Naive thymus-derived CD4-positive, alpha-beta T cell (primary cell): ENCODE measurements at regions of chr12 and their contacts with region 1.

Region 1: GRCh38 chr12:92118826-92119536 is 26.7 kb downstream of the BTG1 start:
- DNase-seq: no peak
- ATAC-seq: no peak
- H3K4me3 ChIP-seq: no peak overlapping the region
- H3K4me3 Mint-ChIP-seq: peak overlapping the region in 3 of 10 donors; percentile 27 to 50 (median 45)
- H3K27ac ChIP-seq: no peak overlapping the region
- H3K27ac Mint-ChIP-seq: peak overlapping the region in 7 of 9 donors; percentile 24 to 64 (median 48)
- H3K4me1 ChIP-seq: peaks cover 16 to 21% of the 10 kb centered on the region in 2 donors
- H3K4me1 Mint-ChIP-seq: peaks cover 34 to 69% (median 63%) of the 10 kb centered on the region in 7 donors
- H3K27me3 ChIP-seq: no peaks in the 10 kb centered on the region
- H3K27me3 Mint-ChIP-seq: no peaks in the 10 kb centered on the region

Region 2: DNA sequence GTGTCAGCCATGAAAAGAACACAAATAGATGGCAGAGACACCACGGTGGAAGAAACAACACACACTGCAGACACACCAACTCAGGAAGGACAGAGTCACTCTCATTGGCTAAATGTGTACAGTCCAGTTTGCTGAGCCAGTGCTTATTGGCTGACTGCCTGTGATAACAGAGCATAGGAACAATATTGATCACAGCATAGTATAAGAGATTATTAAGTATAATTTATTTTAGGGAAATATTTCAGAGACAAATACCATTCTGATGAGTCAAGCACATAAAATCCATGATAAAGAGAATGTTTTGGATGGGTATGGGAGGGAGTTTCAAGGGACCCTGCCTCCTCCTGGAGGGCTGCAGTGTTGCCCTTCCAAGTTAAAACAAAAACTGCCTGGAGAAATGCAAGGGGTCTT is 24.2 kb before region 1 on chr12:
- CTCF ChIA-PET with region 1: interaction called, 3 read pairs
- POLR2A ChIA-PET with region 1: interaction called, 10 read pairs
- intact Hi-C with region 1: no loop called
- DNase-seq: no peak
- ATAC-seq: no peak
- H3K4me3 ChIP-seq: no peak overlapping the region
- H3K4me3 Mint-ChIP-seq: peak overlapping the region in 3 of 10 donors; percentile 22 to 35 (median 29)
- H3K27ac ChIP-seq: no peak overlapping the region
- H3K27ac Mint-ChIP-seq: no peak overlapping the region
- H3K4me1 ChIP-seq: peaks cover 6 to 14% of the 10 kb centered on the region in 2 donors
- H3K4me1 Mint-ChIP-seq: peaks cover 17 to 82% (median 68%) of the 10 kb centered on the region in 7 donors
- H3K27me3 ChIP-seq: no peaks in the 10 kb centered on the region
- H3K27me3 Mint-ChIP-seq: no peaks in the 10 kb centered on the region

Region 3: GRCh38 chr12:92130999-92131398 is 12.0 kb after region 1 on chr12:
- CTCF ChIA-PET with region 1: interaction called, 3 read pairs
- POLR2A ChIA-PET with region 1: interaction called, 46 read pairs
- intact Hi-C with region 1: loop called (anchors 1 to 2 kb)
- DNase-seq: no peak
- ATAC-seq: no peak
- H3K4me3 ChIP-seq: peak overlapping the region; percentile 10
- H3K4me3 Mint-ChIP-seq: peak overlapping the region; percentile 79 to 100 (median 96)
- H3K27ac ChIP-seq: peak overlapping the region; percentile 91
- H3K27ac Mint-ChIP-seq: peak overlapping the region; percentile 87 to 100 (median 93)
- H3K4me1 ChIP-seq: peaks cover 49 to 78% of the 10 kb centered on the region in 2 donors
- H3K4me1 Mint-ChIP-seq: peaks cover 69 to 100% (median 86%) of the 10 kb centered on the region in 7 donors
- H3K27me3 ChIP-seq: no peaks in the 10 kb centered on the region
- H3K27me3 Mint-ChIP-seq: no peaks in the 10 kb centered on the region

Region 4: GRCh38 chr12:92629349-92630065 is 510.5 kb after region 1 on chr12:
- CTCF ChIA-PET with region 1: no interaction called
- POLR2A ChIA-PET with region 1: no interaction called
- intact Hi-C with region 1: no loop called
- DNase-seq: no peak
- ATAC-seq: no peak
- H3K4me3 ChIP-seq: no peak overlapping the region
- H3K4me3 Mint-ChIP-seq: no peak overlapping the region
- H3K27ac ChIP-seq: no peak overlapping the region
- H3K27ac Mint-ChIP-seq: no peak overlapping the region
- H3K4me1 ChIP-seq: no peaks in the 10 kb centered on the region
- H3K4me1 Mint-ChIP-seq: no peaks in the 10 kb centered on the region
- H3K27me3 ChIP-seq: no peaks in the 10 kb centered on the region
- H3K27me3 Mint-ChIP-seq: peaks cover 0 to 4% (median 0%) of the 10 kb centered on the region in 5 donors